ENCODE measurements at regions of chr7 and their contacts with region 1.

Region 1: GRCh38 chr7:152675759-152676636 is at the start of gene XRCC2:
- DNase-seq: peak; percentile 98 to 100 (median 100)
- ATAC-seq: peak; percentile 96
- H3K4me3 ChIP-seq: peak within 1 kb of the TSS; percentile 77
- H3K27ac ChIP-seq: peak within 1 kb of the TSS; percentile 88
- H3K4me1 ChIP-seq: peaks cover 6 to 9% of the 10 kb centered on the region in 2 experiments; a peak in 3 of 5 replicates
- H3K27me3 ChIP-seq: no peaks in the 10 kb centered on the region
- CTCF ChIP-seq: peak in 1 of 3 experiments; percentile 5; a peak in 2 of 6 replicates
- EP300 ChIP-seq: peak; percentile 39
- POLR2A ChIP-seq: peak; percentile 97
- RAD21 ChIP-seq: no peak; a peak in 2 of 4 replicates
- polyA plus RNA-seq, gene XRCC2: 16.2 to 22.4 TPM

Region 2: DNA sequence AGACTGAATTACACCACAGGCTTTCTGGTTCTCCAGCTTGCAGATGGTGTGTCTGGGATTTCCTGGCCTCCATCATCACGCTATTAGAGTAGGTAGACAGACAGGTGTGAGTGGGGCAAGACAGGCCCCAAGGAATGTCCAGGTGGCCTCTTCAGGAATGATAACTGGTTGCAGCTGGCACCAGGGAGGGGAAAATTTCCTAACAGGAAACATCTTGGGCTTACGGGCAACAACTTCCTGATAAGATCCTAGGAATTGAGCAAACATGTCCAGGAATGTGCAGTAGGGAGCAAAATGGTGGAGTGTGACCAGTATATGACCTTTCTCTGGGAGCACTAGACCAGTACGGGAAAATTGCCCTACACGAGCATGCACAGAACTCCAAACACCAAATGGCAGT is 11.4 kb before region 1 on chr7:
- CTCF ChIA-PET with region 1: no interaction called
- POLR2A ChIA-PET with region 1: interaction called, 10 read pairs
- in situ Hi-C with region 1: no loop called
- intact Hi-C with region 1: no loop called
- DNase-seq: no peak
- ATAC-seq: no peak
- H3K4me3 ChIP-seq: no peak overlapping the region
- H3K27ac ChIP-seq: no peak overlapping the region
- H3K4me1 ChIP-seq: no peaks in the 10 kb centered on the region; a peak in 1 of 5 replicates
- H3K27me3 ChIP-seq: no peaks in the 10 kb centered on the region
- CTCF ChIP-seq: no peak
- EP300 ChIP-seq: no peak
- POLR2A ChIP-seq: no peak
- RAD21 ChIP-seq: no peak

Region 3: DNA sequence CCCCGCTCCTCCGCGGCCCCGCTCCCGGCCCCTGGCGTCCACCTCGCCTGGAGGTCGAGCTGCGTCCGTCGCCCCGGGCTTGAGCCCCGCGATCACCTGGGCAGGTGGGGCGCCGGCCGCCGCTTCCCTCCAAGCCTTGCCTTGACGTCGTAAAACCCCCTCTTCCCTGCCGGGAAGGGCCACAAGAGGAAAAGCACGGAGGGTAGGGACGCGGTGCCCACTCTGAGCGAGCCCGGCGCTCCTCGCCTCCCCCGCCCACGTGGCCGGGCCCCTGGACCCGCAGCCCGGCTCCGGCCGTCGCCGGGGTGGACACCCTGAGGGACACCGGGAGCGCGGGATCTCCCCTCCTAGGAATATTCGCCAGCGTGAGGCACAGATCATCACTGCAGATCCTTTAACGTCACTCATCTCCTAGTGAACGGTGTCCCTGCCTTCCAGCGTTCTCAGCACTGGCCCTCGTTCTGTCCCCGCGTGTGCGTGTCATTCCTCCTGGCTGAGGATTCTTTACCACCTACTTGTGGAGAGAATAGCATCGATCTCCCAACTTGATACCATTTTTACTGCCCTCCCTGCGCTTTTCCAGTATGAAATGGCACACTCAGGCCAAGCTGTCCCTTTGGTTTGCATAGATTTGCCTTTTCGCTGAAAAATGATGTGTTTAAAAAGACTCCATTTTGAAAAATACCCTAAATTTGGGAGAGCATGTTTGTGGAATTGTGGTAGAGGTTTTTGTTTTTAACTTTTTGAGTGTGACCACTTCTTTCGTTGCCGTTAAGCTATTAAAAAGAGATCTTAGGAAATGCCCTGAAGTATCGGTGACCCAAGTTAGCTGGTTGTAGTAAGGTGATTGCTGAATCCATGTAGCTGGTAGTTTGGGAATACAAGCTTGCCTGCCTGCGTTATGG is 84.2 kb after region 1 on chr7:
- CTCF ChIA-PET with region 1: no interaction called
- POLR2A ChIA-PET with region 1: no interaction called
- in situ Hi-C with region 1: no loop called
- intact Hi-C with region 1: no loop called
- DNase-seq: peak; percentile 68 to 88 (median 78)
- ATAC-seq: peak; percentile 77
- H3K4me3 ChIP-seq: peak overlapping the region; percentile 86
- H3K27ac ChIP-seq: peak overlapping the region; percentile 92
- H3K4me1 ChIP-seq: peaks cover 7 to 11% of the 10 kb centered on the region in 2 experiments; a peak in 3 of 5 replicates
- H3K27me3 ChIP-seq: peaks cover 10 to 23% of the 10 kb centered on the region in 2 experiments; a peak in 4 of 5 replicates
- CTCF ChIP-seq: 0 out of 6 replicates have a peak, but pooled peaks of 1 of the 3 experiments have one; percentile 9
- EP300 ChIP-seq: no peak
- POLR2A ChIP-seq: peak; percentile 65; the same call in 1 of the 2 replicates
- RAD21 ChIP-seq: no peak